Ovary (tissue), 10 donors: ENCODE measurements at regions of chr3 and their contacts with region 1.

Region 1: GRCh38 chr3:85007195-85008094 is 48.7 kb downstream of the CADM2 start:
- DNase-seq: no peak
- H3K4me3 ChIP-seq: no peak overlapping the region
- H3K27ac ChIP-seq: no peak overlapping the region
- H3K4me1 ChIP-seq: no peaks in the 10 kb centered on the region
- H3K27me3 ChIP-seq: no peaks in the 10 kb centered on the region
- CTCF ChIP-seq: no peak
- EP300 ChIP-seq: no peak
- POLR2A ChIP-seq: no peak

Region 2: GRCh38 chr3:84772841-84773240 is 234.6 kb before region 1 on chr3:
- intact Hi-C with region 1: loop called in 1 of 4 experiments (anchors 5 kb)
- DNase-seq: no peak
- H3K4me3 ChIP-seq: no peak overlapping the region
- H3K27ac ChIP-seq: no peak overlapping the region
- H3K4me1 ChIP-seq: no peaks in the 10 kb centered on the region
- H3K27me3 ChIP-seq: no peaks in the 10 kb centered on the region
- CTCF ChIP-seq: no peak
- EP300 ChIP-seq: no peak
- POLR2A ChIP-seq: no peak

Region 3: GRCh38 chr3:85148036-85148435 is 140.6 kb after region 1 on chr3:
- intact Hi-C with region 1: no loop called
- DNase-seq: no peak
- H3K4me3 ChIP-seq: no peak overlapping the region
- H3K27ac ChIP-seq: no peak overlapping the region
- H3K4me1 ChIP-seq: no peaks in the 10 kb centered on the region
- H3K27me3 ChIP-seq: no peaks in the 10 kb centered on the region
- CTCF ChIP-seq: no peak
- EP300 ChIP-seq: no peak
- POLR2A ChIP-seq: no peak